Dorsolateral prefrontal cortex (tissue), 120 donors: ENCODE measurements at regions of chr12 and their contacts with region 1.

Region 1: GRCh38 chr12:109385339-109386067 is 37.8 kb downstream of the MYO1H start:
- DNase-seq: peak in 2 of 10 donors; percentile 9 to 46
- H3K4me3 ChIP-seq: peak overlapping the region in 9 of 59 donors; percentile 3 to 32 (median 14)
- H3K27ac ChIP-seq: peak overlapping the region in 1 of 59 donors; percentile 44
- H3K27me3 ChIP-seq: peaks cover 0 to 7% (median 0%) of the 10 kb centered on the region in 45 donors
- CTCF ChIP-seq: peak; percentile 55 to 91 (median 73)

Region 2: DNA sequence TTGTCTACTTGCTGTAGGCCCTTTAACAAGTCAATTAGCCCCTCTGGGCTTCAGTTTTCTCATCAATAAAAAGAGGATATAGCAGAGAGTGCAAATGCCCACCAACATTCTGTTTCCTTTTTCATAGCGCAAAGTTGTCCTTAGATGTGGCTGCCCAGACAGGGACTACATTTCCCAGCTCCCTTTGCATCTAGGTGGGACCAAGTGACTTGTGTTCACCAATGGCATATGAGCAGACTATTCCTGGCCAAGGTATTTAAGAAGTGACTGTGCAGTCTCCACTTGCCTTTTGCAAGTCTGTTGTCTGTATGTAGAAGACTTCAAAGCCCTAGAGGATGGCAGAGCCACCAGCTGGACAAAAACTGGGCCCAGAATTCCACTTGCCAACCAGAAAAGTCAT is 445.9 kb before region 1 on chr12:
- intact Hi-C with region 1: no loop called
- DNase-seq: no peak
- H3K4me3 ChIP-seq: no peak overlapping the region
- H3K27ac ChIP-seq: no peak overlapping the region
- H3K27me3 ChIP-seq: no peaks in the 10 kb centered on the region
- CTCF ChIP-seq: no peak

Region 3: GRCh38 chr12:109147954-109148353 is 237.5 kb before region 1 on chr12:
- intact Hi-C with region 1: no loop called
- DNase-seq: no peak
- H3K4me3 ChIP-seq: no peak overlapping the region
- H3K27ac ChIP-seq: peak overlapping the region in 16 of 59 donors; percentile 1 to 71 (median 33)
- H3K27me3 ChIP-seq: no peaks in the 10 kb centered on the region
- CTCF ChIP-seq: no peak

Region 4: GRCh38 chr12:109264095-109264942 is 121.2 kb before region 1 on chr12:
- intact Hi-C with region 1: loop called (anchors 1 to 5 kb)
- DNase-seq: peak; percentile 59 to 81 (median 72)
- H3K4me3 ChIP-seq: no peak overlapping the region
- H3K27ac ChIP-seq: peak overlapping the region in 4 of 59 donors; percentile 5 to 52 (median 9)
- H3K27me3 ChIP-seq: no peaks in the 10 kb centered on the region
- CTCF ChIP-seq: peak; percentile 34 to 88 (median 74)

Region 5: GRCh38 chr12:109719236-109720022 is 333.9 kb after region 1 on chr12:
- intact Hi-C with region 1: no loop called
- DNase-seq: no peak
- H3K4me3 ChIP-seq: peak overlapping the region in 37 of 59 donors; percentile 6 to 89 (median 78)
- H3K27ac ChIP-seq: peak overlapping the region in 58 of 59 donors; percentile 20 to 97 (median 84)
- H3K27me3 ChIP-seq: peaks cover 0 to 5% (median 0%) of the 10 kb centered on the region in 45 donors
- CTCF ChIP-seq: peak in 41 of 56 donors; percentile 12 to 53 (median 30)